Activated CD4-positive, alpha-beta T cell treated with anti-CD3 and anti-CD28 coated beads for 36 hours (primary cell): ENCODE measurements at regions of chr1 and their contacts with region 1.

Region 1: GRCh38 chr1:161117759-161118581 is at the starts of genes NIT1 and PFDN2:
- DNase-seq: peak; percentile 94
- ATAC-seq: peak; percentile 53
- H3K4me3 Mint-ChIP-seq: peak within 1 kb of the TSS; percentile 94
- H3K27ac Mint-ChIP-seq: peak within 1 kb of the TSS; percentile 98
- H3K4me1 Mint-ChIP-seq: peaks cover 75% of the 10 kb centered on the region
- H3K27me3 Mint-ChIP-seq: no peaks in the 10 kb centered on the region
- total RNA-seq, gene NIT1: 58.2 to 62.1 TPM
- total RNA-seq, gene PFDN2: 108 to 136 TPM

Region 2: DNA sequence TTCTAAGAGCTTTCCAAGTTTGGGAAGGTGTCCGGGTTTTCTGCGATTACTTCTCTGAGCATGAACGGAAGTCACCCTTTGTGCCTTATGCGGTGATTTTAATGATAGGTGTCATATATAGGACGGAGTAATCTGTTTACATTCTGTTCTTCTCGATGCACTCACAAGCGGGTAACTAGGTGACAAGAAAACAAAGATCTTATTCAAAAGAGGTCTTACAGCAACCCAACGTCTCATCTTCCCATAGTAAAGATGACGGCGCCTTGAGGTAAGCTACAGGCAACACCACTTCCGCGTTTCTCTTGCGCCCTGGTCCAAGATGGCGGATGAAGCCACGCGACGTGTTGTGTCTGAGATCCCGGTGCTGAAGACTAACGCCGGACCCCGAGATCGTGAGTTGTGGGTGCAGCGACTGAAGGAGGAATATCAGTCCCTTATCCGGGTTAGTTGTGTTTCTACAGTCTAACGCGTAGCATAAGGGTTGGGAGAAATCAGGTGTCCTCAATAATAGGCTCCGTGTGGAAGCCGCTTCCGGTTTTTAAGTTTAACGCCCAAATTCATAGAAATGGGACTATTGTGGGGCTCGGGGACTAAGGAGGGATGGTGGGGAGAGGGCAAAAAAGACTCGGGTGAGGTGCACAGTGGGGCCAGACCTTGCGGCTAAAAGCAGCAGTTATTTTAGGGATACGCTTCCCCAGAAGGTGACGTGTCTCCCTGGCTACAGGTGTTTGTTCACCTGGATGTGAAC is 35.9 kb after region 1 on chr1 and contains the start of gene UFC1:
- CTCF ChIA-PET with region 1: interaction called, 5 read pairs
- POLR2A ChIA-PET with region 1: interaction called, 13 read pairs
- intact Hi-C with region 1: loop called (anchors 1 to 2 kb)
- DNase-seq: peak; percentile 89
- ATAC-seq: peak; percentile 98
- H3K4me3 Mint-ChIP-seq: peak within 1 kb of the TSS; percentile 94
- H3K27ac Mint-ChIP-seq: peak within 1 kb of the TSS; percentile 99
- H3K4me1 Mint-ChIP-seq: peaks cover 20% of the 10 kb centered on the region
- H3K27me3 Mint-ChIP-seq: no peaks in the 10 kb centered on the region
- total RNA-seq, gene UFC1: 89.2 to 98.6 TPM

Region 3: GRCh38 chr1:161159087-161159912 is 41.3 kb after region 1 on chr1 and contains the start of gene USP21:
- CTCF ChIA-PET with region 1: no interaction called
- POLR2A ChIA-PET with region 1: interaction called, 13 read pairs
- intact Hi-C with region 1: loop called (anchors 1 to 2 kb)
- DNase-seq: peak; percentile 95
- ATAC-seq: peak; percentile 96
- H3K4me3 Mint-ChIP-seq: peak within 1 kb of the TSS; percentile 79
- H3K27ac Mint-ChIP-seq: peak within 1 kb of the TSS; percentile 82
- H3K4me1 Mint-ChIP-seq: peaks cover 50% of the 10 kb centered on the region
- H3K27me3 Mint-ChIP-seq: no peaks in the 10 kb centered on the region
- total RNA-seq, gene USP21: 25.1 to 32.0 TPM

Region 4: GRCh38 chr1:161305867-161306519 is 188.0 kb after region 1 on chr1:
- CTCF ChIA-PET with region 1: no interaction called
- POLR2A ChIA-PET with region 1: no interaction called
- intact Hi-C with region 1: loop called in 1 of 2 experiments (anchors 2 kb)
- DNase-seq: peak; percentile 91
- ATAC-seq: peak; percentile 98
- H3K4me3 Mint-ChIP-seq: peak overlapping the region; percentile 96
- H3K27ac Mint-ChIP-seq: peak overlapping the region; percentile 88
- H3K4me1 Mint-ChIP-seq: peaks cover 34% of the 10 kb centered on the region
- H3K27me3 Mint-ChIP-seq: no peaks in the 10 kb centered on the region